ENCODE measurements at regions of chrX and their contacts with region 1.

Region 1: GRCh38 chrX:38166478-38167083 is 54.1 kb downstream of the SRPX start:
- DNase-seq: no peak

Region 2: GRCh38 chrX:37745354-37745753 is 421.2 kb before region 1 on chrX:
- intact Hi-C with region 1: loop called (anchors 10 kb)
- DNase-seq: peak; percentile 83

Region 3: GRCh38 chrX:37802028-37802427 is 364.6 kb before region 1 on chrX:
- intact Hi-C with region 1: no loop called
- DNase-seq: no peak

Region 4: GRCh38 chrX:37926700-37927099 is 239.9 kb before region 1 on chrX:
- intact Hi-C with region 1: loop called (anchors 5 kb)
- DNase-seq: no peak

Region 5: DNA sequence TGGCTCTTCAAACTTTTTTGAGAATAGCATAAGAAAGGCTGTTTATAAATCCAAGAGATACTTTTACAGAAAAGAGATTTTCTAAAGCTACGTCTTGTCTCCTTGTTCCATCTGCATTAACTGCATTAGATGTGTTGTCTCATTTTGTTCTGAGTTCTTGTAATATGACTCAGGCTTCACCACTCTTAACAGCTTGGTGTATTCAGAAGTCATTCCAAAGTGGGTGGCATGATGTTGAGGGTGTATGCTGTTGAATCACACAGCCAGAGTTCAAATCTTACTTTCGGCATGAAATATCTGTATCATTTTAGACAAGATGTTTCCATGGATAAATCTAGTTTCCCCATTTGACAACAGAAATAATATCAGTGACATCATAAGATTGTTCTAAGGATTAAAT is 130.1 kb before region 1 on chrX:
- intact Hi-C with region 1: no loop called
- DNase-seq: no peak

Region 6: DNA sequence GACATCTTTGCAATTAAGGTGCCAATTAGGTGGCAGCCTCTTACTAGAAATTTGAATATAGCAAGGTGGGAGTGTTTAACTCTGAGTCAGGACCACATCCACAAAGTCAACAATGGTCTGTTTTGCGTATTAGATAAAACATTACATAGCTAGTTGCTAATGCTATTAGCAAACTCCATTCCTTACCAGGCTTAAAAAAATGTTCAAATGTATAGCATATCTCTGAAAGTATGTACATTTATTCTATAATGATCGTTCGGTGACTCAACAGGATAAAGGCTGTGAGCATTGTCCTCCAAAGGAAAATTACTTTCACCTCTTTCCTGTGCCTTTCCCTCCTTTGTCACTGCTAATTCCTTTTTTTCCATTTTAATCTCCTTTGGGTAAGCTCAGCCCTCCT is 85.8 kb before region 1 on chrX:
- intact Hi-C with region 1: no loop called
- DNase-seq: no peak

Region 7: GRCh38 chrX:38400389-38400910 is 233.9 kb after region 1 on chrX:
- intact Hi-C with region 1: no loop called
- DNase-seq: no peak